SK-N-SH (cell line): ENCODE measurements at regions of chr1 and their contacts with region 1.

Region 1: DNA sequence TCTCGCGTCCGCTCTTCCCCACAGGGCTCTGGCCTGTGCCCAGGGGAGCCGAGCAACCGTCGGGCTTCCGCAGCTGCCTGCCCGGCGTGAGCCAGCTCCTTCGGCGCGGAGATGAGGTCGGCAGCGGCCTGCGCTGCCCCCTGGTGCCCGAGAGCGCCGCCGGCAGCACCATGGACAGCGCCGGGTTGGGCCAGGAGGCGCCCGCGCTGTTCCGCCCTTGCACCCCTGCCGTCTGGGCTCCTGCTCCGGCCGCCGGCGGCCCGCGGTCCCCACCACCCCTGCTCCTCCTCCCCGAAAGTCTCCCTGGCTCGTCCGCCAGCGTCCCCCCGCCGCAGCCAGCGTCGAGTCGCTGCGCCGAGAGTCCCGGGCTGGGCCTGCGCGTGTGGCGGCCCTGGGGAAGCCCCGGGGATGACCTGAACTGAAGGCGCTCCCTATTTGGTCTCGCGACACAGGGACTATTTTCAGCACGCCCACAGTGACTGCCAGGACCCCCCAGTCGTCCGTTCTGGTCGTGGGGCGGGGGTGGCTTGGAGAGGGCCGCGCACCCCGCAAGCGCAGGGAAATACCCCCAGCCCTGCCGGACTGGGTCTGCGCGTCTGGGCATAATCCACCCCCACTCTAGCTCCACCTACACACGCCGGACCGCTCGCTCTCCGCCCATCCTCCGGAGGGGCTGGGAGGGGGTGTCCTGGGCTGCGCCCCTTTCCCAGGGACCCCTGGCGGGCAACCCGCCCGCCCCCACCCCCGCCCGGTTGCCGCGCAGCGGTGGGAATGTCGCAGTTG is 1.3 kb downstream of the HES3 start:
- DNase-seq: peak; percentile 91
- H3K4me3 ChIP-seq: peak overlapping the region; percentile 44 to 48
- H3K27ac ChIP-seq: peak overlapping the region in 1 of 2 experiments; percentile 76; a peak in 2 of 4 replicates
- H3K4me1 ChIP-seq: no peaks in the 10 kb centered on the region; a peak in 1 of 4 replicates
- H3K27me3 ChIP-seq: no peaks in the 10 kb centered on the region
- CTCF ChIP-seq: peak; percentile 65
- EP300 ChIP-seq: no peak
- RAD21 ChIP-seq: peak; percentile 67

Region 2: GRCh38 chr1:6148497-6149241 is 96.6 kb before region 1 on chr1:
- CTCF ChIA-PET with region 1: no interaction called
- POLR2A ChIA-PET with region 1: no interaction called
- DNase-seq: peak; percentile 92
- H3K4me3 ChIP-seq: peak overlapping the region in 1 of 2 experiments; percentile 19; a peak in 1 of 4 replicates
- H3K27ac ChIP-seq: no peak overlapping the region
- H3K4me1 ChIP-seq: peaks cover 0 to 6% of the 10 kb centered on the region in 2 experiments; a peak in 1 of 4 replicates
- H3K27me3 ChIP-seq: no peaks in the 10 kb centered on the region
- CTCF ChIP-seq: no peak
- EP300 ChIP-seq: no peak
- RAD21 ChIP-seq: no peak

Region 3: GRCh38 chr1:6205849-6206519 is 39.3 kb before region 1 on chr1 and contains the start of gene RNF207:
- CTCF ChIA-PET with region 1: interaction called, 43 read pairs
- POLR2A ChIA-PET with region 1: interaction called, 3 read pairs
- DNase-seq: no peak
- H3K4me3 ChIP-seq: no peak within 1 kb of the TSS; a peak in 1 of 4 replicates
- H3K27ac ChIP-seq: no peak within 1 kb of the TSS
- H3K4me1 ChIP-seq: peaks cover 0 to 18% of the 10 kb centered on the region in 2 experiments; a peak in 1 of 4 replicates
- H3K27me3 ChIP-seq: no peaks in the 10 kb centered on the region
- CTCF ChIP-seq: no peak
- EP300 ChIP-seq: no peak
- RAD21 ChIP-seq: no peak
- polyA plus RNA-seq, gene RNF207: 19.2 and 25.4 TPM in 2 replicates

Region 4: GRCh38 chr1:6280761-6281451 is 35.6 kb after region 1 on chr1:
- CTCF ChIA-PET with region 1: interaction called, 32 read pairs
- POLR2A ChIA-PET with region 1: no interaction called
- DNase-seq: peak; percentile 69
- H3K4me3 ChIP-seq: no peak overlapping the region
- H3K27ac ChIP-seq: no peak overlapping the region
- H3K4me1 ChIP-seq: no peaks in the 10 kb centered on the region
- H3K27me3 ChIP-seq: no peaks in the 10 kb centered on the region
- CTCF ChIP-seq: peak; percentile 31
- EP300 ChIP-seq: no peak
- RAD21 ChIP-seq: peak; percentile 42; the same call in 1 of the 2 replicates

Region 5: DNA sequence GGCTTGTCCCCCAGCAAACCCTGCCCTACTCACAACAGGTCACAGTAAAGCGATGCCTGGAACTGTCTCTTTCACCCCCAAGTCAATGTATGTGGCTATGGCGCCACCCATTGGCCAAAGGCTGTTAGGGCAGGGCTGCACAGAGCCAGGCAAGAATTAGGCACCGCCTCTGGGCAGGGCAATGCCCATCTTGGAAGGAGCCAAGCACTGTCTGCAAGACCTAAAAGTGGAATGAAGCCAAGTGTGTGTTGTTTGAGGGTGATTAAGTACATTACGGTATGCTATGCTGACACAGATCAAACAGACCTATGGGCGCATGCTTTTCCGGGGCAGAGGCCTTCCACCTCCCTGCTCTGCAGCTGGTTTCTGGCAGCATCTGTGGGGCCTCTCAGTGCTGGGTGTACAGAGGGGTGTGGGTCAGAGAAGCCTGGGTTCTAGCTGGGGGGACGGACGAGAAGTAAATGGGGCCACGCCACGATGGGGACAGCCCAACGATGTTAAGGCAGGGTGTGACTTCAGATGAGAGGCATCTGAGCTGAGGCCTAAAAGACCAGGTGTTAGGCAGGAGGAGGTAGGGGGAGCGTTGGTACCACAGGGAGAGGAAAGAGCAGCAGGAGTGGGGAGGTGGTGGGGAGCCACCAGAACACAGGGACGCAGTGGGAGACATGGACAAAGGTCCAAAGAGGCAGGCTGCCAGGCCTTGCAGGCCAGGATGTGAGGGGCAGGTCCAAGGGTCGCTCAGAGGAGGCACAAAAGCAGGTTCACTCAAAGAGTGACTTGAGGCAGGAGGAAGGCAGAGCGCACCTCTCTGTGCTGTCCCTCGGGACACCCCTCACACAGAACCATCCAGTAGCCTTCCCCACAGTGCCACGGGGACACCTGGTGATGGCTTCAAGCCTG is 98.5 kb after region 1 on chr1:
- CTCF ChIA-PET with region 1: interaction called, 318 read pairs
- POLR2A ChIA-PET with region 1: interaction called, 4 read pairs
- DNase-seq: peak; percentile 83
- H3K4me3 ChIP-seq: peak overlapping the region in 1 of 2 experiments; percentile 55; a peak in 1 of 4 replicates
- H3K27ac ChIP-seq: no peak overlapping the region
- H3K4me1 ChIP-seq: no peaks in the 10 kb centered on the region; a peak in 1 of 4 replicates
- H3K27me3 ChIP-seq: no peaks in the 10 kb centered on the region
- CTCF ChIP-seq: peak; percentile 88
- EP300 ChIP-seq: no peak
- RAD21 ChIP-seq: peak; percentile 93

Region 6: GRCh38 chr1:6401673-6402072 is 156.4 kb after region 1 on chr1:
- CTCF ChIA-PET with region 1: interaction called, 82 read pairs
- POLR2A ChIA-PET with region 1: no interaction called
- DNase-seq: no peak
- H3K4me3 ChIP-seq: no peak overlapping the region
- H3K27ac ChIP-seq: no peak overlapping the region
- H3K4me1 ChIP-seq: no peaks in the 10 kb centered on the region
- H3K27me3 ChIP-seq: no peaks in the 10 kb centered on the region
- CTCF ChIP-seq: no peak
- EP300 ChIP-seq: no peak
- RAD21 ChIP-seq: no peak

Region 7: GRCh38 chr1:6423321-6423999 is 178.2 kb after region 1 on chr1:
- CTCF ChIA-PET with region 1: interaction called, 131 read pairs
- POLR2A ChIA-PET with region 1: no interaction called
- DNase-seq: peak; percentile 81
- H3K4me3 ChIP-seq: 0 out of 4 replicates have a peak overlapping the region, but pooled peaks of 1 of the 2 experiments have one; percentile 11
- H3K27ac ChIP-seq: no peak overlapping the region
- H3K4me1 ChIP-seq: peaks cover 6 to 18% of the 10 kb centered on the region in 2 experiments; a peak in 1 of 4 replicates
- H3K27me3 ChIP-seq: peaks cover 26% of the 10 kb centered on the region
- CTCF ChIP-seq: peak; percentile 65
- EP300 ChIP-seq: no peak
- RAD21 ChIP-seq: peak; percentile 42